HEK293T (cell line): ENCODE measurements at regions of chr5 and their contacts with region 1.

Region 1: DNA sequence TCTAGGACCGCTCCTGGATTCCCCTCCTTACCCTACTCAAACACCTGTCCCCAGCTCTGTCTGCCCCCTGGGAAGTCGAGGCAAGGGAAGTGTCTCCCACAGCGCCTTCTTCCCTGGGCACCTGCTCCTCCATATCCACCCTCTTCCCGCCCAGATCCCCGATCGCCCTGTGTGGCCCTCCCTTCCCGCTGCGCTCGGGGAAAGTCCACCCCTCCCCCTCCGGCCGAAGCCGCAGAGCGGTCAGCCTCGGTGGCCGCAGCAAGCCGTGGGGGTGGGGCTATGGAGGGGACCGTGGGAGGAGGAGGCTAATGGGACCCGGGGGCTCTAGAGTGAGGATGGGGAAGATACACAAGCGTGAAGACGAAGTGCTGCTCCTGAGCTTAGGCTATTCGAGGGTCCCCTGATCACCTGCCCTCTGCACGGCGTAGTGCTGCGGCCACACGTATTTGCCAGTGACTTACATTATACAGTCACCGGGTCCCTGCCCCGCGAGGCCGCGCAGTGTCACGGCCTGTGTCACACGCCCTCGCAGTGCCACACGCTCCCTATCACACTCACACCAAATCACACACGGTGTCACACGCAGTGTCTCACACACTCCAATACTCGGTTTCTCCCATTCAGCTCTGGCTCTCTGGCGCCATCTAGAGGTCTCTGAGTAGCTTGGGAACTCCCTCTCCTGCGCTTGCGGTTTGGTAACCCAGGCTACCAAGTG is 658 bp upstream of the PCDH1 start:
- DNase-seq: peak; percentile 75

Region 2: GRCh38 chr5:141664732-141665461 is 214.0 kb before region 1 on chr5:
- CTCF ChIA-PET with region 1: interaction called, 19 read pairs
- POLR2A ChIA-PET with region 1: no interaction called
- DNase-seq: peak; percentile 84

Region 3: GRCh38 chr5:141701360-141702119 is 177.3 kb before region 1 on chr5:
- CTCF ChIA-PET with region 1: interaction called, 16 read pairs
- POLR2A ChIA-PET with region 1: no interaction called
- DNase-seq: no peak

Region 4: GRCh38 chr5:141816598-141817372 is 62.1 kb before region 1 on chr5:
- CTCF ChIA-PET with region 1: interaction called, 11 read pairs
- POLR2A ChIA-PET with region 1: no interaction called
- DNase-seq: no peak

Region 5: DNA sequence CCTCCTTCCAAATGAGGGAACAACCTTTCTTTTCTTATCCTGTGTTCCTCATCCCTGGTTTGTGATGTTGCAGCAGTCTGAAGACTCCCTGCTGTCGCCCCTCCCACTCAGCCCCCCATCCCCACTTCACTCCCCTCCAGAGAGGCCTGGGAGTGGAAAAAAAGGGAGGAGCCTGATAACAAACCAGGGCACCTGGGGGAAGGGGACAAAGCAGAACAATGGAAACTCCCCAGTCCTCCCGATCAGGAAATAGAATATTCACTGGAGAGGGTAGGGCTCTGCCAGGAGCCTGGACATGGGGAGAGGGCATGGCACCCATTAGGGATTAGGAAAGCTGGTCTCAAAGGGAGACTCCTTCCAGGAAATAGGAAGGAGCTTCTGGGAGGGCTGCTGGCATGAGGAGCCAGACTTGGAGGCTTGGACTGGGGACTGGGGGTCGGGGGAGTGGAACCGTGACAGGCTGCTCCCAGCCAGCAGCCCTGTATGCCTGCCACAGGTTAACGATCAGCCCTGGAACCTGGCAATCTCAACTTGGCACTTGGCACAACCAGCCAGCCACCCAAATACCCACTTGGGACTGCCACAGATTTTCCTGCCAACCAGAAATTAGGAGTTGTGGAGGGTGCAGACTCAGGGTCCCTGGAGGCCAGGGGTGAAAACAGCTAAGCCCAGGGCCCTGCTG is 20.6 kb before region 1 on chr5:
- CTCF ChIA-PET with region 1: interaction called, 10 read pairs
- POLR2A ChIA-PET with region 1: no interaction called
- DNase-seq: no peak

Region 6: DNA sequence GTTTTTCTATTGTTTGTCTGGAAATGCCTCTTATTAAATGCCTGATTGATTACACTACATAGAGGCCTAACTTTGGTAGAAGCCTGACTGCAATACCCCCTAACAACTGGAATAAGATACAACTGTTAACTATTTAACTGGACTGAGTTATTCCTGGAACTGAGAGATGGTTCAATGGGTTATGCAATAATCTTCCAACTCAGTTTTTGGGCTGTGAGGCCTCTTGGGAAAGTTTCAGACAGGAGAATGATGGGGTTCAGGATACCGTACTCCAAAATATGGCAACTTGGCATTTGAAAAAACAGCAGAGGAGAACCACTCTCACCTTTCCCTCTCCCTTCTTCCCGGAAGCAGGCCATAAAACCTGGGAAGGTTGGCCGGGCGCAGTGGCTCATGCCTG is 18.6 kb after region 1 on chr5:
- CTCF ChIA-PET with region 1: interaction called, 12 read pairs
- POLR2A ChIA-PET with region 1: no interaction called
- DNase-seq: no peak

Region 7: GRCh38 chr5:141960449-141961202 is 81.8 kb after region 1 on chr5:
- CTCF ChIA-PET with region 1: interaction called, 33 read pairs
- POLR2A ChIA-PET with region 1: interaction called, 6 read pairs
- DNase-seq: peak; percentile 85